ENCODE measurements at regions of chr14 and their contacts with region 1.

Region 1: DNA sequence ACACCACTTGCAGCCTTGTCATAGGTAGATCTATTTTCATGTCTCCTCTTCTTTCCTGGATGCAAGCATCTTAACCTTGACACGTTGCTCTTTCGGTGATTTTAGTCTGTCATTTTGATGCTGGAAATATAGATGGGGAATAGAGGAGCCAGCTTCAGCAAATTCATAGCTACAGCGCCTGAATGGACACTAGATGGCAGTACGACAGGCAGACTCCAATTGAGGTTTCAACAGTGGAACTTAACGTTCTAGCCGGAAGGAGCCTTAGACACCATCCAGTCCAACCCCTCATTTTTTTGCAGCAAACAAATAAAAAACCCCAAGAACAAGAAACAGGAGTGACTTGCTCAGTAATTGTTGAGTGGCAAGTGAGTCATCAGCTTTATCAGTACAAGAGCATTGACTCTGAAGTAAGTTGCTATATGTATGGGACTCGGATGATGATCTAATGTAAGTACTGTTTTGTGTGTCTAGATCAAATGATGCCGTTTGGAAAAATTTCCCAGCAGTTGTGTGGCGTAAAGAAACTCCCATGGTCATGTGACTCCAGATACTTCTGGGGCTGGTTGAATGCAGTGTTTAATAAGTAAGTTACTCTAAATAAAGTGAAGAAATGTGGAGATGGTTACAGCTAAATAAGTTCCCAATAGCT is 9.0 kb downstream of the DMAC2L start:
- DNase-seq: peak; percentile 35 to 91
- ATAC-seq: peak; percentile 95 to 99 (median 96)
- H3K4me3 ChIP-seq: no peak overlapping the region
- H3K4me3 Mint-ChIP-seq: no peak overlapping the region
- H3K27ac ChIP-seq: peak overlapping the region; percentile 70
- H3K27ac Mint-ChIP-seq: no peak overlapping the region
- H3K4me1 ChIP-seq: no peaks in the 10 kb centered on the region
- H3K4me1 Mint-ChIP-seq: peaks cover 4 to 13% of the 10 kb centered on the region in 2 donors
- H3K27me3 ChIP-seq: no peaks in the 10 kb centered on the region
- H3K27me3 Mint-ChIP-seq: no peaks in the 10 kb centered on the region
- CTCF ChIP-seq: peak; percentile 74

Region 2: DNA sequence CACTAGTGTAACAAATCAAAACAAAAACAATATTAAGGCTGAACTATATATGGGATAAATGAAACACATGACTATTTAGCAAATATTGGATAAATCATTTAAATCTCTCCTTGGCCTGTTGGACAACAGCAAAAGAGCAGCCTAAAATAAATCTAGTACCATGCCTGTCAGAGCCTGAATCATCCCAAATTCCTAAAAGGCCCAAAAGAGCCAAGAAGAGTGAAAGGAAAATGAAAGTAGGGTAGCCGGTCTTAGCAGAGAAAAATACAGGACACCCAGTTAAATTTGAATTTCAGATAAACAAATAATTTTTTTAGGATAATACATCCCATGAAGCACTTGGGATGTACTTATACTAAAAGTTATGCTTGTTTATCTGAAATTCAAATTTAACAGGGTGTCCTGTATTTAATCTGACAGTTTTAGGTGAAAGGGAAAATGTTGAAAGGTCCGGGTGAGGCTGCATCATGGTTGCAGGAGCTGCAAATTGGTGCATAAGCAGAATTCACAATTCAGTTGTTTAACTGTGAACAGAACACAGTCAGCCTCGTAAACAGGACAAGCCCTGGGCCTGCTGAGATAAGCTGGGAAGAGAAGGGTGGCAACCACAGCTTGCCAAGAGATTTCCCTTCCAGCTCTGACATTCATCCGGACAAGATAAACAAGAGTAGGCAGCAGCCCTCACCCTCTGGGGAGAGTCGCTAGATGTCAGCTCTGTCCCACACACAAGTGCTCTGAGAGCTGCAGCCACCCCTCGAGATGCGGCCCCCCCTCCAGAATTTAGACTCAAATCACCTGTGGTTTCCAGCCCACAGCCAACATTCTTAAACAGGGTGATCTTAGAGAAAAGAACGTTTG is 21.3 kb after region 1 on chr14:
- intact Hi-C with region 1: no loop called
- DNase-seq: peak in 1 of 2 donors; percentile 68
- ATAC-seq: peak; percentile 86 to 99 (median 93)
- H3K4me3 ChIP-seq: no peak overlapping the region
- H3K4me3 Mint-ChIP-seq: peak overlapping the region; percentile 40
- H3K27ac ChIP-seq: no peak overlapping the region
- H3K27ac Mint-ChIP-seq: peak overlapping the region in 1 of 2 donors; percentile 70
- H3K4me1 ChIP-seq: peaks cover 7% of the 10 kb centered on the region
- H3K4me1 Mint-ChIP-seq: peaks cover 16 to 27% of the 10 kb centered on the region in 2 donors
- H3K27me3 ChIP-seq: no peaks in the 10 kb centered on the region
- H3K27me3 Mint-ChIP-seq: no peaks in the 10 kb centered on the region
- CTCF ChIP-seq: peak; percentile 51

Region 3: GRCh38 chr14:50363714-50364111 is 42.6 kb after region 1 on chr14:
- intact Hi-C with region 1: loop called (anchors 1 kb)
- DNase-seq: peak; percentile 30 to 80
- ATAC-seq: peak; percentile 67 to 84 (median 70)
- H3K4me3 ChIP-seq: peak overlapping the region; percentile 44
- H3K4me3 Mint-ChIP-seq: peak overlapping the region; percentile 89
- H3K27ac ChIP-seq: peak overlapping the region; percentile 91
- H3K27ac Mint-ChIP-seq: peak overlapping the region; percentile 92 to 93
- H3K4me1 ChIP-seq: peaks cover 64% of the 10 kb centered on the region
- H3K4me1 Mint-ChIP-seq: peaks cover 50 to 55% of the 10 kb centered on the region in 2 donors
- H3K27me3 ChIP-seq: no peaks in the 10 kb centered on the region
- H3K27me3 Mint-ChIP-seq: no peaks in the 10 kb centered on the region
- CTCF ChIP-seq: no peak

Region 4: DNA sequence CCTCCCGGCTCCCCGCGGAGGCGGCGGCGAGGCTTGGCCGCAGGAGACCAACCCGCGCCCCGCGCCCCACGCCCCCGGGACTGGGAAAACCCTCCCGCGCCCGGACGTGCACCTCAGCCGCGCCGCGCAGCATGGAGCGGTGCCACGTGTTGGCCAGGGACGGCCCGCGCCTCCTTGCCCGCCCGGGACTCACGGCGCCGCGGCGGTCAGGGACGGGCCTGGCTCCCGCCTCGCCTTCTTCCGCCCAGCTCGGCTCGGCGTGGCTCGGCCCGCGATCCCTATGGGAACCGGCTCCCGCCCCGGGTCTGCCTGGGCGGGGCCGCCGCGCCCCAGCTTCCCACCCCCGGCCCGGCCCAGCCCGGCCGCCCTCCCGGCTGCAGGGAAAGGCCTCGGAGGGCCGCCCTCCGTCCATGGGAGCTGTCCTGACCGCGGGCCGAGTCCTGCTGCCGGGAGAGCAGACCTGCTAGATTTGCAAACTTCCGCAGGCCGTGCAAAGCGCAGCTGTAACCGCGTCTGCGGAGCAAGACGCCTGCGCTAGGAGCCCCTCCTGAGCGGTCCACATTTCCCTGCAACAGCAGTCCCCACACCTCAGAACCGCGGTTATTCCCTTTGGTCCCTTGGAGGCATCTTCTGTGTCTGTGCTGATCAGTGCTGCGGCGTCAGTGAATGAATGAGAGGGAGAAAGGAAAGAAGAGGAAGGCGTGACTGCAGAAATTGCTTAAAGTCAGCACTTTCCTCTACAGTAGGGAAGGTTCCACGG is 75.7 kb after region 1 on chr14 and contains the start of gene CDKL1:
- intact Hi-C with region 1: loop called (anchors 2 kb)
- DNase-seq: peak; percentile 28 to 56
- ATAC-seq: peak; percentile 72 to 80 (median 77)
- H3K4me3 ChIP-seq: peak within 1 kb of the TSS; percentile 48
- H3K4me3 Mint-ChIP-seq: peak within 1 kb of the TSS; percentile 91
- H3K27ac ChIP-seq: no peak within 1 kb of the TSS
- H3K27ac Mint-ChIP-seq: peak within 1 kb of the TSS; percentile 47 to 83
- H3K4me1 ChIP-seq: peaks cover 7% of the 10 kb centered on the region
- H3K4me1 Mint-ChIP-seq: peaks cover 6 to 13% of the 10 kb centered on the region in 2 donors
- H3K27me3 ChIP-seq: no peaks in the 10 kb centered on the region
- H3K27me3 Mint-ChIP-seq: peaks cover 0 to 5% of the 10 kb centered on the region in 2 donors
- CTCF ChIP-seq: no peak
- total RNA-seq, gene CDKL1: 12.4 to 16.7 (median 15.4) TPM